CD8-positive, alpha-beta T cell (primary cell): ENCODE measurements at regions of chr20 and their contacts with region 1.

Region 1: GRCh38 chr20:38825901-38826625 is 20.6 kb downstream of the PPP1R16B start:
- DNase-seq: no peak
- ATAC-seq: no peak
- H3K4me3 ChIP-seq: no peak overlapping the region
- H3K4me3 Mint-ChIP-seq: no peak overlapping the region
- H3K27ac ChIP-seq: peak overlapping the region in 1 of 2 experiments; percentile 11
- H3K27ac Mint-ChIP-seq: no peak overlapping the region
- H3K4me1 ChIP-seq: peaks cover 27% of the 10 kb centered on the region
- H3K4me1 Mint-ChIP-seq: peaks cover 72% of the 10 kb centered on the region
- H3K27me3 ChIP-seq: no peaks in the 10 kb centered on the region
- H3K27me3 Mint-ChIP-seq: no peaks in the 10 kb centered on the region
- CTCF ChIP-seq: no peak

Region 2: DNA sequence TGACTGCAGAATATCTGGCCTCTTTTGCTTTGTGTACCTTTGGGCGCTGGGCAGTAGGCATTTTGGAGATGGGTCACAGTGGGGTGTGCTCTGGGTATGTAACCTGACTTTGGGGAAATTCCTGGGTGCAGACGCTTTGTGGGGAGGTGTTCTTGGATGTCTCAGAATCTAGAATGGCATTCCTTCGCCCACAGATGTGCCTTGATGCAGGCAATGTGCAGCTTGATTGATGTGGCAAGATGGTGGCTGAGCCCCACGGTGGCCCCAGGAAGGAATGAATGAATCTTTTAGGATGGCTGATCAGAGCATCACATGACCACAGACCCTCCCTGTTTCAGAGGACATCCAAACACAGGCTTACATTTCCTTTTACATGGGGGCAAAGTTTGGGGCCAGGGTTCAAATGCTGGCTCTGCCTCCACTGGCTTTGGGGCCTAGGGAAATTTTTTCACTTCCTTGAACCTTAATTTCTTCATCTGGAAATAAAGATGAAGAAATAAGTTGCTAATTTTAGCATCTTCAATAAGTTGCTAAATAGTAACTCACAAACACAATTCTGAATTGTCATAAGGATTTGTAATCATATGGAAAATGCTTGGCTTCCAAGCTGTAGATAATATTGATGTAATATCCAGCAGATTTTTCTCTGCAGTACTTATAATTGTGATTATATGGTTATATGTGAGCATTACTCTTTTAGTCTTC is 15.0 kb before region 1 on chr20:
- CTCF ChIA-PET with region 1: no interaction called
- POLR2A ChIA-PET with region 1: interaction called, 3 read pairs
- intact Hi-C with region 1: loop called in 1 of 2 experiments (anchors 2 kb)
- DNase-seq: peak in 1 of 9 experiments; percentile 39
- ATAC-seq: no peak
- H3K4me3 ChIP-seq: no peak overlapping the region
- H3K4me3 Mint-ChIP-seq: no peak overlapping the region
- H3K27ac ChIP-seq: no peak overlapping the region
- H3K27ac Mint-ChIP-seq: peak overlapping the region; percentile 66
- H3K4me1 ChIP-seq: peaks cover 46% of the 10 kb centered on the region
- H3K4me1 Mint-ChIP-seq: peaks cover 84% of the 10 kb centered on the region
- H3K27me3 ChIP-seq: no peaks in the 10 kb centered on the region
- H3K27me3 Mint-ChIP-seq: no peaks in the 10 kb centered on the region
- CTCF ChIP-seq: no peak